RWPE1 (cell line): ENCODE measurements at regions of chr12 and their contacts with region 1.

Region 1: DNA sequence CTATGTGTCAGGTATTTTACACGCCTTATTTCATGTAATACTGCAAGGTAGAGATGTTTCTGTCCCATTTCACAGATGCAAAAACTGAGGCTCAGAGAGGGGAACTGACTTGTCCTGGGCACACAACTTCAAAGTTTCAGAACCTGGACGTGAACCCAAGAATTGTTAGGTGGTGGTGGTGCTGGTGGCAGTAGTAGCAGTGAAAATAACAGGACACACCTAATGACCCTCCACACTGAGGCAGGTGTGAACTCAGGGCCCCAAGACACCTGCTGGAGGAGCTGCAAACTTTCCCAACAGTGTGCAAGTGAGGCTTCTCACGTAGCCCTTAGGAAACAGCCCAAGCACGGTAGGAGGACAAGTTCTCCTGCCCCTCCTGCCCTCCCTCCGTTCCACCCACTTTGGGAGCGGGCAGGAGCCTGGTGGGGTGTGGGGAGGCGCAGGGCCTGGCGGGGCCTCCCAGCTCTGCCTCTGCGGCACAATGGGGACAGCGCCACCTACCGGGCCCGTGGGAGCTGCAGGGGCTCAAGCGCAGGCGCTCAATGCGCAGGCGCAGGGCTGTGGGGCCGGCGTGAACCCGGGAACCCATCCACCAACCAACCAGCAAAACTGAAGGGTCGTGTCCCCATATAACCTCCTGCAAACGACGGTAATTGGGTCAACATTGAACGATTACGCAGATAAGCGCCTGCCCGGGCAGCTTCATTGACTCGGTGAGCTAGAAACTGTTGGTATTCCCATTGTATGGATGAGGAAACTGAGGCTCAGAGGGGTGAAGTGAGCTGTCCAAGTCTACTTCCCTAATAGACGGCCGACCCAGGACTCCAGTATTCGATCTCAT is 12.0 kb upstream of the TRPV4 start:
- DNase-seq: peak; percentile 95
- H3K27ac ChIP-seq: no peak overlapping the region
- CTCF ChIP-seq: peak; percentile 98

Region 2: DNA sequence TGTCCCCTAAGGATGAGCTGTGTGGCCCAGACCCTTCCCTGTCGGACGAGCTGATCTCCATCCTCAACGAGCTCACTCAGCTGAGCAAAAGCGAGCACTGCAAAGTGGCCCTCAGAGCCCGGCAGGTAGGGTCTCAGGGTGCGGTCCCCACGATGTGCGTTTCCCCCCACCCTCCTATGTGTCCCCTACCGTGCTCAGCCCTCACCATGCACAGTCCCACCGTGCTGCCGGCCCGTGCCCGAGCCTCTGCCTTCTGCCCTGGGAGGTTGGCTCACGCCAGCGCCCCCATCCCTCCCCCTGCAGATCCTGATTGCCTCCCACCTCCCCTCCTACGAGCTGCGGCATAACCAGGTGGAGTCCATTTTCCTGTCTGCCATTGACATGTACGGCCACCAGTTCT is 622.7 kb before region 1 on chr12:
- CTCF ChIA-PET with region 1: no interaction called
- POLR2A ChIA-PET with region 1: no interaction called
- DNase-seq: no peak
- H3K27ac ChIP-seq: no peak overlapping the region
- CTCF ChIP-seq: no peak

Region 3: GRCh38 chr12:109804820-109805761 is 40.1 kb before region 1 on chr12:
- CTCF ChIA-PET with region 1: interaction called, 61 read pairs
- POLR2A ChIA-PET with region 1: no interaction called
- DNase-seq: peak; percentile 82
- H3K27ac ChIP-seq: no peak overlapping the region
- CTCF ChIP-seq: peak; percentile 94

Region 4: GRCh38 chr12:109818905-109819500 is 26.2 kb before region 1 on chr12:
- CTCF ChIA-PET with region 1: interaction called, 14 read pairs
- POLR2A ChIA-PET with region 1: no interaction called
- DNase-seq: peak; percentile 87
- H3K27ac ChIP-seq: peak overlapping the region; percentile 92
- CTCF ChIP-seq: no peak

Region 5: DNA sequence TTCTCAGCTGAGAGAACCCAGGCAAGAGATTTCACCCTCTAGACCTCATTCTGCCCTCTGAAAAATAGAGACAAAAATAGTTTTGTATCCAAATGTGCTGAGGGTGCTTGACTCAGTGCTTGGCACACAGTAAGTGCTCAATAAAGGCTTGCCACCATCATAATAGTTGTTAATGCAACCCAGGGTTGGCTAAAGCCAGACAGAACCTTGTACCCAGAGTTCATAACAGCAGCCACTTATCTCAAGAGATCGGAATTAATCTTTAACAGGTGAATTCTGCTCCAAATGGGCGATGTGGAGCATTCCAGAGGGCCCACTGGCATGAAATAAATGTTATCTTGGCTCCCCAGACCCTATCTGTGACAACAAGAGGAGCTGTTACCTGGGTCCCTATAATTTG is 14.9 kb before region 1 on chr12:
- CTCF ChIA-PET with region 1: interaction called, 12 read pairs
- POLR2A ChIA-PET with region 1: no interaction called
- DNase-seq: no peak
- H3K27ac ChIP-seq: no peak overlapping the region
- CTCF ChIP-seq: no peak

Region 6: GRCh38 chr12:109858764-109859163 is 13.6 kb after region 1 on chr12:
- CTCF ChIA-PET with region 1: interaction called, 13 read pairs
- POLR2A ChIA-PET with region 1: no interaction called
- DNase-seq: no peak
- H3K27ac ChIP-seq: peak overlapping the region; percentile 28
- CTCF ChIP-seq: no peak